ENCODE measurements at regions of chr16 and their contacts with region 1.

Region 1: GRCh38 chr16:23521965-23522364 is 11.7 kb upstream of the GGA2 start:
- DNase-seq: no peak
- ATAC-seq: no peak
- H3K4me3 ChIP-seq: no peak overlapping the region
- H3K27ac ChIP-seq: no peak overlapping the region
- H3K4me1 ChIP-seq: peaks cover 0 to 33% (median 0%) of the 10 kb centered on the region in 9 donors
- H3K27me3 ChIP-seq: no peaks in the 10 kb centered on the region
- CTCF ChIP-seq: no peak

Region 2: GRCh38 chr16:23510164-23510914 is 11.6 kb before region 1 on chr16 and contains the start of gene GGA2:
- intact Hi-C with region 1: loop called in 1 of 10 experiments (anchors 1 kb)
- DNase-seq: peak; percentile 80 to 86
- ATAC-seq: peak; percentile 92 to 97 (median 94)
- H3K4me3 ChIP-seq: peak within 1 kb of the TSS; percentile 66 to 92 (median 85)
- H3K27ac ChIP-seq: peak within 1 kb of the TSS; percentile 28 to 94 (median 86)
- H3K4me1 ChIP-seq: peaks cover 5 to 41% (median 27%) of the 10 kb centered on the region in 9 donors
- H3K27me3 ChIP-seq: no peaks in the 10 kb centered on the region
- CTCF ChIP-seq: peak in 4 of 9 donors; percentile 8 to 32 (median 26)
- total RNA-seq, gene GGA2: 32.6 to 52.9 (median 40.6) TPM

Measured in heart right ventricle (tissue), 16 donors.